ENCODE measurements at regions of chr6 and their contacts with region 1.

Region 1: GRCh38 chr6:31827286-31828079 is at the start of gene HSPA1B:
- H3K4me3 ChIP-seq: peak within 1 kb of the TSS; percentile 65
- H3K27ac ChIP-seq: peak within 1 kb of the TSS; percentile 69
- H3K4me1 ChIP-seq: no peaks in the 10 kb centered on the region
- CTCF ChIP-seq: peak; percentile 35; the same call in 1 of the 2 replicates

Region 2: DNA sequence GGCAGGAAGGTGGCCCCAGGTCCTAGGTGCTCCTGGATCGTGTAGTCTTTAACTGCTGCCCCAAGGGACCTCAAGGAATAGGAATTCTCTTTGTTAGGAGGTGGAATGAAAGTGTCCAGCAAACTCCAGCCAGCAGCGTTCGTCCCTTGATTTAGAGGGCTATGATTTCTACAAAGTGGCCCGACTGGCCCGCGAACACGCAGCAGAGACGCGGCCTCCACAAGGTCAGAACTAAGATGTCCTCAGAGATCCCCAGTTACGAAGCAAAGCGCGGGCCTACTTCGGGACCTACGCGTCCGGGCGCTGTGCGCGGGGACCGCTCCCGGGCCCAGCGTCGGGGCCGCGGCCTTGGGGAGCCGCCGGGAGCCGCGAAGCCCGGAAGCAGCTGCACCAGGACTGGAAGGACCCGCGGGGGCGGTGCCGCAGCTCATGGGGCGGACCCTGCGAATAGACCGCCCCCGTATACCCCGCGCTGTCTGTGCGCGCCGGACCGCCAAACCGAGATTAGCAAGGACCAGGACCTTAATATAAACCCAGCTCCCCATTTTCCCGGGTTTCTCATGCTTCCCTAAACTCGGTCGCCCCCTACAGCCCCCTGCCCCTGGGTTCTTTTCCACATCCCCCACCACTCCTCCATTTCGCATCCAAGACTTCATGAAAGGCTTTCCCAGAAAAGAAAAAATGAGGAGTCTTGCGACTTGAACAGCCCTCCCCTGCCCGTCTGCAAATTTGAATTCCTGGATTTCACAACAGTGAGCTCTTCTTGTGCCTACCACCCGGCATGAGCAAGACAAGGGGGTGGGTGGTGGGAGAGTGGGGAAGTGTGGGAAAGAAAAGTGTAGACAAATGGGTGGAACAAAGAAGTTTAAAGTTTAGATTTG is 166.9 kb before region 1 on chr6 and contains the start of gene C6orf47:
- CTCF ChIA-PET with region 1: interaction called, 3 read pairs
- POLR2A ChIA-PET with region 1: interaction called, 36 read pairs
- H3K4me3 ChIP-seq: peak within 1 kb of the TSS; percentile 67
- H3K27ac ChIP-seq: peak within 1 kb of the TSS; percentile 73
- H3K4me1 ChIP-seq: peaks cover 6% of the 10 kb centered on the region; the same call in 1 of the 2 replicates
- CTCF ChIP-seq: no peak

Region 3: GRCh38 chr6:31712296-31712695 is 115.2 kb before region 1 on chr6:
- CTCF ChIA-PET with region 1: interaction called, 4 read pairs
- POLR2A ChIA-PET with region 1: interaction called, 12 read pairs
- H3K4me3 ChIP-seq: no peak overlapping the region
- H3K27ac ChIP-seq: no peak overlapping the region
- H3K4me1 ChIP-seq: peaks cover 4% of the 10 kb centered on the region
- CTCF ChIP-seq: peak; percentile 42; the same call in 1 of the 2 replicates

Region 4: DNA sequence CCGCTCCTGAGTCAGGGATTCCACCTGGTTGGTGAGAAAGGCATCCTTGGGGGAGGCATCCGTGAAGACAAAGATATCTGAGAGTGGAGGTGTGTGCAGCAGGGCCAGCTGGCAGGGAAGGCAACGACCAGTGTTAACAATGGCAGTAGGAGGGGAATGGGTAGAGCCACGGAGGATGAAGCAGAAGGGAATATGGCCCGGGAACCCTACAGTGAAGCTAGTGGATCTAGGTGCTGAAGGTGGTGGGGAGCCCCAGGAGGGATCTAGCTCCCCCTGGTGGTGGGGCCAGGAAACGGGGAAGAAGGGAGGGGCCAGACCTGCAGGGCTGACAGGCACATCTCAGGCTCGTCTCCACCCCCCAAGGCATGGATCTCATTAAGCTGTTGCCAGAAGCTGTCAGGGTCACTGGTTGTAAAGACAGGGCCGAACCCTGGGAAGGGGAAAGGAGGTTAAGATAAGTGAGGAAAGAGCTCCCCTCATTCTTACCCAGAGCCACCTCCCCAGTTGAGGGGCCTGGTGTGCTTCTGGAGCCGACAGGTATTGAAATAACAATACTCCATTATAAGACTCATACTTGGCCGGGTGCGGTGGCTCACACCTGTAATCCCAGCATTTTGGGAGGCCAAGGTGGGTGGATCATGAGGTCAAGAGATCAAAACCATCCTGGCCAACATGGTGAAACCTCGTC is 57.7 kb before region 1 on chr6:
- CTCF ChIA-PET with region 1: interaction called, 17 read pairs
- POLR2A ChIA-PET with region 1: interaction called, 48 read pairs
- H3K4me3 ChIP-seq: no peak overlapping the region
- H3K27ac ChIP-seq: no peak overlapping the region
- H3K4me1 ChIP-seq: no peaks in the 10 kb centered on the region
- CTCF ChIP-seq: peak; percentile 93

Region 5: DNA sequence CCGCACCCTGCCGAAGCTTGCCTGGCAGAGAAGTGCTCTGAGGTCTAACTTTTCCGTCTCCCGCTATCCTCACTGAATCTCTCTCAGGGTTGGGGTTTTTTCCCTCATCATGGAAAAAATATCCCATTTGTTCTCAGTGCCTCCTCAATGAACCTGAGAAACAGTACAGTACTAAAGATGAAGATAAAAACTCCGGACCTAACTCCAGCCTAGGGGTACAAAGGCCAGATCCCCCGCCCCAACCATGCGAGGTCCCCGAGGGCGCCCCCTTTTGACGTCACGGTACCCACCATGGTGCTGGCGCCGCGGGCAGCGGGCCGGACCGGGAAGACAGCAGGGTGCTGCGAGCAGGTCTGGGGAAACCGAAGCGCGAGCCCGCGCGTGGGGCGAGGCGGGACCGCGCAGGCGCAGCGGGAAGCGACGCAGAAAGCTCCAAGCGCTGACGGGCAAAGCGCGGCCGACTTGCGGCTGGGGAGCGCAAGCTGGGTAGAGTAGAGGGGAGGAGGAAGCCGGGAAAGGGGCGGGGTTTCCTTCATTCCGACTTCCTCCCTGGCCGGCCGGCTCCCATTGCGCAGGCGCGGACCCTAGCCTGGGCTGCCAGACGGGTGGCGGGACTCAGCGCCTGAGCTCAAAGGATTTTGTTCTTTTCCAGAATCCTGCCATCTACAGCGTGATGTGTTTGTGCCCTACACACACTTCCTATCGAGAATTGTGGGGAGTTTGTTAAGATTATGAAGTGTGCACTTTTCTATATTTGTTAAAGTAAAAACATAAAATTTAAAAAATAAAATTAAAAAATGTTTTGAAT is 20.8 kb before region 1 on chr6 and contains the start of gene LSM2:
- CTCF ChIA-PET with region 1: interaction called, 10 read pairs
- POLR2A ChIA-PET with region 1: interaction called, 206 read pairs
- H3K4me3 ChIP-seq: peak within 1 kb of the TSS; percentile 91
- H3K27ac ChIP-seq: peak within 1 kb of the TSS; percentile 65
- H3K4me1 ChIP-seq: no peaks in the 10 kb centered on the region
- CTCF ChIP-seq: peak; percentile 96

Region 6: DNA sequence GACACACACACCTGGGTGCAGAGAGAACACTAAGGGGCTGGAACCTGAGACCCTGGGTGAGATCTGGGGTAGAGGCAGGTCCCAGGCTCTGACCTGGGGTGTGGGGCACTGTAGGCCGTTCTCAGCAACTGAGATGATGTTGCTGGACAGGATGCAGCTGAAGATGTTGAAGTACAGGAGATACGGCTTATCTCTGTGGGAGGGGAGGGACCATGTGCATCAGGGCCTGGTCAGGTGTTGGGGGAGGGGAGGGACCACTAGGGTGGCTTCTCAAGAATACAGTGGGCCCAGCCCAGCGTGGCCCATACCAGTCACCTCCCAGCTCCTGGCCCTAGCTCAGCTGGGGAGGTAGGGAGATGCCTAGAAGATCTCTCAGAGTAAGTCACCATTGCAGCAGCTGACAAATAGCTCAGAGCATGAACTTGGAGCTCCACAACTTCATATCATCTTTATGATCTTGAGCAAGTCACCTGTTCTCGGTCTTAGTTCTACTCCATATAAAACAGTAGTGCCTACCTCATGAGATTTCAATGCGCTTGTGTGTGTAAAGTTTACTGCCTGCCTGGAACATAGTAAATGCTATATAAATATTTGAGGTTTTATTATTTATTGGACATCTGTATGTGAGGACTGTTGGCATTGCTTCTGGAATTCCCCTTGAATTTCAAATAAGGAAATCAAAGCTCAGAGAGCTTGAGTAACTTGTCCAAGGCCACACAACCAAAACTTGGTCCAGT is 47.5 kb after region 1 on chr6:
- CTCF ChIA-PET with region 1: interaction called, 4 read pairs
- POLR2A ChIA-PET with region 1: interaction called, 10 read pairs
- H3K4me3 ChIP-seq: no peak overlapping the region
- H3K27ac ChIP-seq: no peak overlapping the region
- H3K4me1 ChIP-seq: no peaks in the 10 kb centered on the region; the same call in 1 of the 2 replicates
- CTCF ChIP-seq: no peak

Measured in HEK293 (cell line).